Activated CD4-positive, alpha-beta T cell treated with anti-CD3 and anti-CD28 coated beads for 36 hours (primary cell): ENCODE measurements at regions of chr13 and their contacts with region 1.

Region 1: GRCh38 chr13:39542361-39542760 is 60.6 kb downstream of the LHFPL6 start:
- DNase-seq: no peak
- ATAC-seq: no peak
- H3K4me3 Mint-ChIP-seq: no peak overlapping the region
- H3K27ac Mint-ChIP-seq: no peak overlapping the region
- H3K4me1 Mint-ChIP-seq: no peaks in the 10 kb centered on the region
- H3K27me3 Mint-ChIP-seq: peaks cover 18% of the 10 kb centered on the region

Region 2: DNA sequence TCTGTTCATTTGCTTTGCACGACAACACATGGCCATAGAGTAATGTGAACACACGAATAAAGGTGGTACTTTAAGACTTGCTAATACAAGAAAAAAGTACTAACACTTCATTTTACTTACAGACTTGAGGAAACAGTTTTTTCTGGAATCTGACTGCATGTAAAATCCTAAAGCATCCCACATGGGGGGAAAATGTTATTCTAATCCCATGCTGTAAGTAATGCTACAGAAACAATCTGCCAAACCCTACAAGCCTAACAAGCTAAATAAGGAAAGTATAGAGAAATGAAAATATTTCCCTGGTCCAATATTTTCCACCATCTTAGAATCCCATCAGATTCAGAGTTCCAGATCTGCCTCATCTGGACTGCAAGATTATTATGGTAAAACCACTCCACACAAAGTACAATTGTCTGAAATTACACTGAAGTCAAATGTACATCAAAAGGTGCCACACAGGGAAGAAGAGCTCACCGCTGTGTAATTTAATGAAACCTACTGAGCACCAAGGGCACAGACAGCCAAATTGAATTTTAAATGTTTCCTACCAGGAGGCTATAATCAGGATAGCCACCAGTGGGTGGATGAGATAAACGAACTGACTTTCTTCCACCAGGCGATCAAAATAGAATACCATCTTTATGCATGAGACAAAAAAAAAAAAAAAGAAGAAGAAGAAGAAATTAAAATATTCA is 38.7 kb after region 1 on chr13:
- CTCF ChIA-PET with region 1: no interaction called
- POLR2A ChIA-PET with region 1: interaction called, 12 read pairs
- intact Hi-C with region 1: no loop called
- DNase-seq: no peak
- ATAC-seq: no peak
- H3K4me3 Mint-ChIP-seq: no peak overlapping the region
- H3K27ac Mint-ChIP-seq: no peak overlapping the region
- H3K4me1 Mint-ChIP-seq: no peaks in the 10 kb centered on the region
- H3K27me3 Mint-ChIP-seq: peaks cover 2% of the 10 kb centered on the region